ENCODE measurements at regions of chrX and their contacts with region 1.

Region 1: DNA sequence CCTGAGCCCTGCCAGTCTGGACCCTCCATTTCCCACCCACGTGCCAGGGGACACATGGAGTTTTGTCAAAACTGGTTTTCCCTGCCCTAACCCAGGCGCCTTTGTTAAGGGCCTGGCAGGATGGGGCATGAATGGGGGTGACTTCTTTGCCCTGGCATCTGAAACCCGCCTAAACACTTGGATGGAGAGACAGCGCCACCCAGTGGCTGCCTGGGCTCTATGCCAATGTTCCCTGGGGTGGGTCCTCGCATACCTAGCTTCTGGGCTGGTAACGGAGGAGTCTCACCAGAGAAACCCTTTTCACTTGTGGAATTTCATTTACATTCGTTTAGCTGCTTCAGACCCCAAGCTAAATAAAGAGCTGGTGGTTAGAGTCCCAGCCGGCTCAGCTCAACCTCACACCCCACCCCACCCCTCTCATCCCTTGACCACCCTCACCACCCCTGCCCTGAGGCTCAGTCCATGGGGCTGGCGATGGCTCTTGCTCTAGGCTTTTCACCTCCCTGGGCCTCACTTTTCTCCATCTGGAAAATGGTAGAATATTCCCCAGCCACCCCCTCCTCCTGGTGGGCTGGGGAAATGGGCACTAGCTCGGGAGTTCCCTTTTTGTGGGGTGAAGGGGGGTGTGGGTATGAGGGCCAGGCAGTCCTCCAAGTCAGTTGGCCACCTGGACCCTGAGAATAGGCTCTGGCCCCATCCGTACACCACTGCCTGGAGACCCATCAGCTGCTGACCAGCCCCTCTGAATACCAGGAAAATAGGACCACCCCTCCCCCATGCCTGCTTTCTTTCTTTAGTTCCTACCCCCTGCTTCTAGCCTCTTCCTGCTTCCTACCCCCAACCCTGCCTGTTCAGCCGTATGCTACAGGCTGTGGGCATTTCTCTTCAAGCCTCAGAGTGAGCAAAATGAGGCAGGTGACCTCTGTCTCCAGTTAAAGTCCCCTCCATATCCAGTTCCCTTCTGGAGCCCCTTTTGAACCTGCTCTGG is 57.1 kb upstream of the PJA1 start:
- DNase-seq: peak; percentile 43 to 77
- H3K4me3 ChIP-seq: no peak overlapping the region
- H3K27ac ChIP-seq: no peak overlapping the region
- H3K4me1 ChIP-seq: no peaks in the 10 kb centered on the region
- H3K27me3 ChIP-seq: no peaks in the 10 kb centered on the region
- CTCF ChIP-seq: peak; percentile 85

Region 2: GRCh38 chrX:68732906-68733493 is 489.4 kb before region 1 on chrX:
- CTCF ChIA-PET with region 1: no interaction called
- POLR2A ChIA-PET with region 1: no interaction called
- intact Hi-C with region 1: loop called (anchors 2 kb)
- DNase-seq: peak in 1 of 2 experiments; percentile 54
- H3K4me3 ChIP-seq: no peak overlapping the region
- H3K27ac ChIP-seq: no peak overlapping the region
- H3K4me1 ChIP-seq: no peaks in the 10 kb centered on the region
- H3K27me3 ChIP-seq: peaks cover 11% of the 10 kb centered on the region
- CTCF ChIP-seq: peak; percentile 66

Region 3: GRCh38 chrX:68945603-68946228 is 276.7 kb before region 1 on chrX:
- CTCF ChIA-PET with region 1: interaction called, 13 read pairs
- POLR2A ChIA-PET with region 1: no interaction called
- intact Hi-C with region 1: no loop called
- DNase-seq: peak in 1 of 2 experiments; percentile 16
- H3K4me3 ChIP-seq: no peak overlapping the region
- H3K27ac ChIP-seq: no peak overlapping the region
- H3K4me1 ChIP-seq: peaks cover 10% of the 10 kb centered on the region; the same call in 1 of the 2 replicates
- H3K27me3 ChIP-seq: no peaks in the 10 kb centered on the region
- CTCF ChIP-seq: no peak; the same call in none of the 2 replicates

Region 4: DNA sequence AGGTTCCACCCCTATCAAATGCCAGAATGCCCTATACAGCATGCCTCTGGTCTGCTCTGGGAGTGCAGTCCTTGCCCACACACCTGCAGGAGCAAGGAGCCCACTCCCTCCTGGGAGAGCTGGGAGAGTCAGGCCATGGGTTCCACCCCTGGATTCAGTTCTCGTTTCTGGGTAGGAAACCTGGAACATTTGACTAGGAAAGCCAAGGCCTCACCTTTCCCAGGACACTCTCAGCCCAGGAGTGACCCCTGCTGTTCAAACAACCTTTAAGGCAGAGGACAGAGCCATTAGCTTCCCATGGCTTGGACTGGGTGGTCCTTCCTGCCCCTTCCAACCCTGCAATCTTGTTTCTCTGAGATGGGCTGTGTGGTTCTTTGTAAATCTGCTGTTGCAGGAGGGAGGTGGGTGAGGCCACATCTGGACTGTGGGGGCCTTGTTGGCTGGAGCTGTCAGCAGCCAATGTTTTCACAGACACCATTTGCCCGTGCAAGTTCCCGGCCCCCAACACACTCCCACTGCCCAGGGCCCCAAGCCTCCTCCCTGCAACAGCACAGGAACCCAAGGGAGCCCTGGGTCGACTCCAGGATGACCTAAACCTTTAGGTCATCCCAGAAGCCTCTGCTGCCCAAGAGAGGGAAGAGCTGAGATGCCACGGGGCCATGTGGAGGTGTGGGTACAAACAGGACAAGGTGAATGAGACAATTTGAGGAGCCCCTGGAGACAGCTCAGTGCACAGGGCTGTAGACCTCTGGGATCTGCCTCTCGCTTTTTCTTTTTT is 161.6 kb before region 1 on chrX:
- CTCF ChIA-PET with region 1: no interaction called
- POLR2A ChIA-PET with region 1: no interaction called
- intact Hi-C with region 1: loop called (anchors 10 kb)
- DNase-seq: peak in 1 of 2 experiments; percentile 41
- H3K4me3 ChIP-seq: no peak overlapping the region
- H3K27ac ChIP-seq: no peak overlapping the region
- H3K4me1 ChIP-seq: no peaks in the 10 kb centered on the region
- H3K27me3 ChIP-seq: no peaks in the 10 kb centered on the region
- CTCF ChIP-seq: peak; percentile 54; the same call in 1 of the 2 replicates

Region 5: GRCh38 chrX:69133921-69134542 is 88.4 kb before region 1 on chrX:
- CTCF ChIA-PET with region 1: interaction called, 3 read pairs
- POLR2A ChIA-PET with region 1: no interaction called
- intact Hi-C with region 1: loop called (anchors 5 kb)
- DNase-seq: peak; percentile 37 to 68
- H3K4me3 ChIP-seq: no peak overlapping the region
- H3K27ac ChIP-seq: no peak overlapping the region
- H3K4me1 ChIP-seq: no peaks in the 10 kb centered on the region
- H3K27me3 ChIP-seq: no peaks in the 10 kb centered on the region
- CTCF ChIP-seq: peak; percentile 58

Region 6: GRCh38 chrX:69189576-69190371 is 32.6 kb before region 1 on chrX:
- CTCF ChIA-PET with region 1: no interaction called
- POLR2A ChIA-PET with region 1: no interaction called
- intact Hi-C with region 1: no loop called
- DNase-seq: no peak
- H3K4me3 ChIP-seq: no peak overlapping the region
- H3K27ac ChIP-seq: no peak overlapping the region
- H3K4me1 ChIP-seq: no peaks in the 10 kb centered on the region
- H3K27me3 ChIP-seq: no peaks in the 10 kb centered on the region
- CTCF ChIP-seq: no peak

Region 7: GRCh38 chrX:69285881-69286564 is 63.6 kb after region 1 on chrX:
- CTCF ChIA-PET with region 1: no interaction called
- POLR2A ChIA-PET with region 1: no interaction called
- intact Hi-C with region 1: loop called (anchors 10 kb)
- DNase-seq: peak in 1 of 2 experiments; percentile 44
- H3K4me3 ChIP-seq: peak overlapping the region; percentile 46; the same call in 1 of the 2 replicates
- H3K27ac ChIP-seq: no peak overlapping the region
- H3K4me1 ChIP-seq: no peaks in the 10 kb centered on the region
- H3K27me3 ChIP-seq: no peaks in the 10 kb centered on the region
- CTCF ChIP-seq: peak; percentile 84

Measured in PC-9 (cell line).